Right ventricle myocardium inferior (tissue), 1 donor: ENCODE measurements at regions of chr14 and their contacts with region 1.

Region 1: GRCh38 chr14:89303457-89304435 is 113.3 kb downstream of the FOXN3 start:
- DNase-seq: no peak
- ATAC-seq: peak; percentile 85

Region 2: DNA sequence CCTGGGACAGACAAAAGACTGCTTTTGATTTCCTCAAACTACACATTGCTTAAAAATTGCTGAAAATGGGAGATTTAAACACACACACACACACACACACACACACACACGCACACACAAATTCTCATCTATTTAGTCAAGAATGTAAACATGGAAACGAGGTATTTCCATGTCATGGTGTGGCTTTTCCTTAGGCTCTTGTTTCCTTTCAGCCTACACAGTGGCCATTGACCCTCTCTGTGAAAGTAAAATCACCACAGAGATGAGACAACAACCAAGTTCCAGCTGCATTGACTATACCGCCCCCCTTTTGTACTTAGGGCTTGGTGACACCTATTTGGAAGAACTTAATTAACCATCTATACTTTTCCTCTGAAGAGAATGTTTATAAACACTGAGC is 437.4 kb before region 1 on chr14:
- intact Hi-C with region 1: no loop called
- DNase-seq: no peak
- ATAC-seq: no peak

Region 3: DNA sequence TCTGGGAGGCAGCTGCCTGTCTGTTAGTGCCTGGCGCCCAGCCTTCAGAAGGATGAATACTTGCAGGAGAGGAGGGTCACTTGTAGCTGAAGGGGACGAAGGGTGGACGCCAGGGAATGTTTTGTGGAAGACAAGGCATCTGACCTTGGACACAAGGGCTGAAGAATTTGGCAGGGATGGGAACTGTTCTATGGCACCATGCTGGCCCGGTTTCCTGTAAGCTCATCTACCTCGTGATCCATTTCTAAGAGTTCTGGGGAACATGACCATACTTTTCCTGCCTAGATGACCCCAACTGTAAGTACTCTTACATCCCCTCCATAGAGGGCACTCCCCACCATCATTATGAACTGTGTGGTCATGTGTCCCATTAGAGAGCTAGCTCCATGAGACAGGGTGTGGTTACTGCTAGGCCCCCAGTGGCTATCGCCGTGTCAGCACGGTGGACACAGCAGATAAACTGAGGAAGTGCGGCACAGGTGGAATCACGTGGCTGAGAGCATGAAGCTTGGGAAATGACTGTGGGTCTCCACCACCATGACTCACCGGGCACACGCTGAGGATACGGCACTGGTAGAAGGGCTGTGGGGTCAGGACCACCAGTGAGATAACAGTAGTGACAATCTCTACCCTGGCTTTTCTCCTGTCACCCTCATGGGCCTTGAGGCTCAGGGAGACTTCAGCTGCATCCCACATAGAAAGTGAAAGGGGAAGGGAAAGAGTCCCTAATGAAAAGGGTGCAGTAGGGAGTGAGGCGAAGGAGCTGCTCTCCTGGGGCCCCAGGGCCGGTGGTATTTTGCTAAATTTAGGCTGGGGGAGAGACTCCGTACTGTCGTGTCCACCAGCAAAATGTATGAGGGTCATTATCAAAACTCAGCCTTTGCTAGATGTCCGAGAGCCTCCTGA is 139.3 kb before region 1 on chr14:
- intact Hi-C with region 1: no loop called
- DNase-seq: no peak
- ATAC-seq: peak; percentile 36

Region 4: GRCh38 chr14:89351516-89352404 is 48.0 kb after region 1 on chr14:
- intact Hi-C with region 1: loop called (anchors 5 kb)
- DNase-seq: no peak
- ATAC-seq: no peak